Heart left ventricle (tissue), 16 donors: ENCODE measurements at regions of chr16 and their contacts with region 1.

Region 1: GRCh38 chr16:19086322-19087199 is 19.1 kb downstream of the COQ7 start:
- DNase-seq: peak; percentile 81 to 94 (median 85)
- ATAC-seq: peak; percentile 90 to 99 (median 97)
- H3K4me3 ChIP-seq: peak overlapping the region in 11 of 12 donors; percentile 2 to 65 (median 54)
- H3K27ac ChIP-seq: peak overlapping the region in 2 of 12 donors; percentile 19 to 38
- H3K4me1 ChIP-seq: peaks cover 0 to 17% (median 8%) of the 10 kb centered on the region in 12 donors
- H3K27me3 ChIP-seq: no peaks in the 10 kb centered on the region
- CTCF ChIP-seq: peak; percentile 98 to 100 (median 100)
- POLR2A ChIP-seq: no peak

Region 2: GRCh38 chr16:19044769-19045168 is 41.8 kb before region 1 on chr16:
- intact Hi-C with region 1: no loop called
- DNase-seq: no peak
- ATAC-seq: no peak
- H3K4me3 ChIP-seq: no peak overlapping the region
- H3K27ac ChIP-seq: no peak overlapping the region
- H3K4me1 ChIP-seq: no peaks in the 10 kb centered on the region
- H3K27me3 ChIP-seq: no peaks in the 10 kb centered on the region
- CTCF ChIP-seq: no peak
- POLR2A ChIP-seq: no peak

Region 3: GRCh38 chr16:19130852-19131810 is 44.6 kb after region 1 on chr16:
- intact Hi-C with region 1: loop called in 1 of 10 experiments (anchors 10 kb)
- DNase-seq: peak; percentile 66 to 80 (median 72)
- ATAC-seq: peak; percentile 68 to 91 (median 82)
- H3K4me3 ChIP-seq: peak overlapping the region in 7 of 12 donors; percentile 4 to 27 (median 18)
- H3K27ac ChIP-seq: peak overlapping the region; percentile 67 to 94 (median 86)
- H3K4me1 ChIP-seq: peaks cover 0 to 72% (median 39%) of the 10 kb centered on the region in 12 donors
- H3K27me3 ChIP-seq: no peaks in the 10 kb centered on the region
- CTCF ChIP-seq: no peak
- POLR2A ChIP-seq: no peak

Region 4: GRCh38 chr16:19139436-19140091 is 53.0 kb after region 1 on chr16:
- intact Hi-C with region 1: loop called in 2 of 10 experiments (anchors 2 to 10 kb)
- DNase-seq: no peak
- ATAC-seq: no peak
- H3K4me3 ChIP-seq: no peak overlapping the region
- H3K27ac ChIP-seq: peak overlapping the region in 4 of 12 donors; percentile 20 to 69 (median 41)
- H3K4me1 ChIP-seq: peaks cover 0 to 54% (median 36%) of the 10 kb centered on the region in 12 donors
- H3K27me3 ChIP-seq: no peaks in the 10 kb centered on the region
- CTCF ChIP-seq: no peak
- POLR2A ChIP-seq: no peak

Region 5: DNA sequence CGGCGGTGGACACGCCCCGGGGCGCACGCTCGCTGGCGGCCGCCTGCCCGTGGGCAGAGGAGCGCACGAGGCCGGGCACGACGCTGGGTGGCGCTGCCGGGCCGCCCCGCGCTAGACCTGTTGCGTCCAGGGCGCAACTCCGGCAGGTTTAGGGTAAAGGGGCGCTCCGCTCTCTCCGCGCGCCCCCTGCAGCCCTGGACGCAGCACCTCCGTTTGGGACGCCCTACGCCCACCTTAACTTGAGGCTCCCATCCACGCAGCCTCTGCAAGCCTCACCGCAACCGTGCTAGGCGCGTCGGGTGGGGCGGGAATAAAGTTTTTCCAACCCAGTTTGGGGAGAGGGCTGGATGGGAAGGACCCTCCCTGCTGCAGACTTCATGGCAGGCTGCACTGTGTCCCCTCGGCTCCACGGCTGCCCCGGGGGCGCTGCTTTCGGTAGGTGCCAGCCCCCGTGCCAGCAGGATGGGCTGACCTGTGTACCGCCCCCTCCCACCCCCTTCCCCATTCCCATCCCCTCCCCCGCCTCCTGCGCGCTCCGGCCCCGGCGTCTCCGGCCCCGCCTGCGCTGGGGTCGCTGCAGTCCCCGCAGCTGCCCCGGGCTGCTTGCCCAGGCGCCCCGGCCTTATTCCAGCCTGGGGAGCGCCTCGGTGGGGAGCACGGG is 81.3 kb after region 1 on chr16 and contains the start of gene SYT17:
- intact Hi-C with region 1: loop called in 8 of 10 experiments (anchors 2 to 10 kb)
- DNase-seq: peak; percentile 64 to 86 (median 71)
- ATAC-seq: peak in 3 of 4 donors; percentile 88 to 93 (median 93)
- H3K4me3 ChIP-seq: peak within 1 kb of the TSS; percentile 43 to 69 (median 58)
- H3K27ac ChIP-seq: peak within 1 kb of the TSS in 8 of 12 donors; percentile 9 to 63 (median 45)
- H3K4me1 ChIP-seq: peaks cover 0 to 21% (median 6%) of the 10 kb centered on the region in 12 donors
- H3K27me3 ChIP-seq: peaks cover 0 to 35% (median 15%) of the 10 kb centered on the region in 9 donors
- CTCF ChIP-seq: peak; percentile 60 to 82 (median 72)
- POLR2A ChIP-seq: no peak
- total RNA-seq, gene SYT17: 0.23 to 5.2 (median 0.76) TPM

Region 6: GRCh38 chr16:19179546-19180490 is 93.3 kb after region 1 on chr16:
- intact Hi-C with region 1: loop called in 6 of 10 experiments (anchors 1 to 5 kb)
- DNase-seq: peak; percentile 50 to 81 (median 54)
- ATAC-seq: peak; percentile 64 to 76 (median 72)
- H3K4me3 ChIP-seq: no peak overlapping the region
- H3K27ac ChIP-seq: no peak overlapping the region
- H3K4me1 ChIP-seq: peaks cover 0 to 5% (median 0%) of the 10 kb centered on the region in 12 donors
- H3K27me3 ChIP-seq: peaks cover 0 to 8% (median 0%) of the 10 kb centered on the region in 9 donors
- CTCF ChIP-seq: peak; percentile 41 to 82 (median 62)
- POLR2A ChIP-seq: no peak

Region 7: GRCh38 chr16:19375561-19376158 is 289.1 kb after region 1 on chr16:
- intact Hi-C with region 1: loop called (anchors 1 to 2 kb)
- DNase-seq: peak in 3 of 5 donors; percentile 19 to 32 (median 28)
- ATAC-seq: peak in 3 of 4 donors; percentile 59 to 75 (median 71)
- H3K4me3 ChIP-seq: no peak overlapping the region
- H3K27ac ChIP-seq: no peak overlapping the region
- H3K4me1 ChIP-seq: peaks cover 0 to 3% (median 0%) of the 10 kb centered on the region in 12 donors
- H3K27me3 ChIP-seq: no peaks in the 10 kb centered on the region
- CTCF ChIP-seq: peak; percentile 77 to 93 (median 82)
- POLR2A ChIP-seq: no peak

Region 8: GRCh38 chr16:19502395-19503131 is 416.0 kb after region 1 on chr16:
- intact Hi-C with region 1: loop called (anchors 1 to 5 kb)
- DNase-seq: peak in 4 of 5 donors; percentile 57 to 69 (median 60)
- ATAC-seq: peak in 3 of 4 donors; percentile 63 to 72 (median 65)
- H3K4me3 ChIP-seq: no peak overlapping the region
- H3K27ac ChIP-seq: no peak overlapping the region
- H3K4me1 ChIP-seq: peaks cover 0 to 12% (median 2%) of the 10 kb centered on the region in 12 donors
- H3K27me3 ChIP-seq: no peaks in the 10 kb centered on the region
- CTCF ChIP-seq: peak; percentile 55 to 79 (median 68)
- POLR2A ChIP-seq: no peak